ENCODE measurements at regions of chr14 and their contacts with region 1.

Region 1: GRCh38 chr14:21269252-21270046 is at the start of gene HNRNPC:
- DNase-seq: peak; percentile 100
- ATAC-seq: peak; percentile 91
- H3K4me3 ChIP-seq: peak within 1 kb of the TSS; percentile 98
- H3K27ac ChIP-seq: peak within 1 kb of the TSS; percentile 100
- H3K4me1 ChIP-seq: peaks cover 13% of the 10 kb centered on the region
- H3K27me3 ChIP-seq: no peaks in the 10 kb centered on the region
- CTCF ChIP-seq: no peak
- EP300 ChIP-seq: no peak
- POLR2A ChIP-seq: peak; percentile 97
- RAD21 ChIP-seq: no peak
- polyA plus RNA-seq, gene HNRNPC: 679 to 1,422 TPM

Region 2: GRCh38 chr14:21184254-21184653 is 85.2 kb before region 1 on chr14:
- CTCF ChIA-PET with region 1: no interaction called
- POLR2A ChIA-PET with region 1: no interaction called
- RAD21 ChIA-PET with region 1: no interaction called
- SMC1A ChIA-PET with region 1: no interaction called
- in situ Hi-C with region 1: no loop called
- intact Hi-C with region 1: no loop called
- DNase-seq: no peak
- ATAC-seq: no peak
- H3K4me3 ChIP-seq: no peak overlapping the region
- H3K27ac ChIP-seq: no peak overlapping the region
- H3K4me1 ChIP-seq: no peaks in the 10 kb centered on the region
- H3K27me3 ChIP-seq: no peaks in the 10 kb centered on the region
- CTCF ChIP-seq: no peak
- EP300 ChIP-seq: no peak
- POLR2A ChIP-seq: no peak
- RAD21 ChIP-seq: no peak

Region 3: GRCh38 chr14:21308479-21309237 is 39.2 kb after region 1 on chr14:
- CTCF ChIA-PET with region 1: interaction called, 5 read pairs
- POLR2A ChIA-PET with region 1: interaction called, 13 read pairs
- RAD21 ChIA-PET with region 1: interaction called, 18 read pairs
- SMC1A ChIA-PET with region 1: interaction called, 15 read pairs
- in situ Hi-C with region 1: no loop called
- intact Hi-C with region 1: loop called (anchors 1 kb)
- DNase-seq: peak; percentile 88
- ATAC-seq: peak; percentile 94
- H3K4me3 ChIP-seq: peak overlapping the region; percentile 70
- H3K27ac ChIP-seq: peak overlapping the region; percentile 79
- H3K4me1 ChIP-seq: peaks cover 15% of the 10 kb centered on the region
- H3K27me3 ChIP-seq: no peaks in the 10 kb centered on the region
- CTCF ChIP-seq: no peak
- EP300 ChIP-seq: no peak
- POLR2A ChIP-seq: peak; percentile 82
- RAD21 ChIP-seq: no peak

Region 4: DNA sequence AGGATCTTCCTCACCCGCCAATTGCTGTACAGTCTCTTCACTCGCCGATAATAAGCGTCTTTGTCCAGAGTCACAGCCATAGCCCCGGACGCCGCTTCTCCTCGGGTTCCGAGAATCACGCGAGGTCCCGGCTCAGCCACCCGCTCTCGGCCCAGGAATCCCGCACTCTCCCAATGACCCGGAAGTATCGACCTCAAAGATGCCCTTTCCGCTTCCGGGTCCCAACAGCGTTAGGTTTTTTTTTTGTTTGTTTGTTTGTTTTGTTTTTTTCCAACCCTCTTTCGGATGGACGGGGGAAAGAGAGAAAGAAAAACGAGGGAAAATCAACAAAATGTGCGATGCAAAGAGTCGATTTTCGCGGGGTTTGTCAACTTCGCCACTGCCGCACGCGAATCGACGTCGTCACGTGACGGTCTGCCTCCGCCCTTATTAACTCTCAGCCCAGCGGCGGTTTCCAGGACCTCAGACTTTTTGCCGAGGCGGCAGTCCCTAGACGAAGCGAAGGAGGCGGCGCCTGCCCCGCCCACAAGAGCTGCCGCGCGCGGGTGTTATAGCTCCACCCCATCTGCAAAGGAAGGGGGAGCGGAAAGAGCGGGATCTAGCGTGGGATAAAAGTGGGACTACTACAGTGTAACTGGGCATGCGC is 114.5 kb after region 1 on chr14 and contains the start of gene SUPT16H:
- CTCF ChIA-PET with region 1: no interaction called
- POLR2A ChIA-PET with region 1: interaction called, 6 read pairs
- RAD21 ChIA-PET with region 1: interaction called, 13 read pairs
- SMC1A ChIA-PET with region 1: interaction called, 15 read pairs
- in situ Hi-C with region 1: no loop called
- intact Hi-C with region 1: loop called (anchors 10 kb)
- DNase-seq: peak; percentile 71
- ATAC-seq: peak; percentile 91
- H3K4me3 ChIP-seq: peak within 1 kb of the TSS; percentile 95
- H3K27ac ChIP-seq: peak within 1 kb of the TSS; percentile 94
- H3K4me1 ChIP-seq: peaks cover 9% of the 10 kb centered on the region
- H3K27me3 ChIP-seq: no peaks in the 10 kb centered on the region
- CTCF ChIP-seq: no peak
- EP300 ChIP-seq: no peak
- POLR2A ChIP-seq: peak; percentile 64
- RAD21 ChIP-seq: no peak
- polyA plus RNA-seq, gene SUPT16H: 90.7 to 106 TPM